ENCODE measurements at regions of chr3 and their contacts with region 1.

Region 1: DNA sequence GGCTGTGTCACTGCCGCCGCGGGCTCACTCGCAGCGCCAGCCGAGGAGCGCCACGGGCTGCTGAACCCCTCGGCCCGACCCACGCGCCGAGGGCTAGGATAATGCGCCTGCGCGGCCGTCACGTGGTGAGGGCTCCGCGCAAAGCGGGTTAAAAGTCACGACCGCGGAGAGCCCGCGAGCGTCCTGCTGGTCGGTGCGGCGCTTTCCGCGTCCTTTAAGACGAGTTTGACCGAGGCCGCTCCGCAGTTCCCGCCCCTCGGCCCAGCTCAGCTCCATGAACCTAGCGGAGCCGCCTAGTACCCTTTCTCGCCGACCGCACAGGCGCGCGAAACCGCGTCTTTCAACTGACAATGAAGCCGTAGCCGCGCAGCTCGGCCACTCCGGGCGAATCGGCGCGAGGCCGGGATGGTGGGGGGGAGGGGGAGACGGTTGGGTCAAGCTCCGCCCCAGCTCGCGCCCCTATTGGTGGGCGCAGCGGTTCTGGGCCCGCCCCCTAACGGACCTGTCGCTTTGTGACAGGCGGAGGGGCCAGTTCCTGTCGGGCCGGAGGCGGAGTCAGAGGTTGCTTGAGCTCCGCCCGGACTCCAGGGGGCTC is 636 bp upstream of the STT3B start:
- DNase-seq: peak; percentile 98
- H3K4me3 Mint-ChIP-seq: no peak overlapping the region
- H3K27ac Mint-ChIP-seq: peak overlapping the region; percentile 99
- H3K4me1 Mint-ChIP-seq: peaks cover 21% of the 10 kb centered on the region
- H3K27me3 Mint-ChIP-seq: no peaks in the 10 kb centered on the region

Region 2: DNA sequence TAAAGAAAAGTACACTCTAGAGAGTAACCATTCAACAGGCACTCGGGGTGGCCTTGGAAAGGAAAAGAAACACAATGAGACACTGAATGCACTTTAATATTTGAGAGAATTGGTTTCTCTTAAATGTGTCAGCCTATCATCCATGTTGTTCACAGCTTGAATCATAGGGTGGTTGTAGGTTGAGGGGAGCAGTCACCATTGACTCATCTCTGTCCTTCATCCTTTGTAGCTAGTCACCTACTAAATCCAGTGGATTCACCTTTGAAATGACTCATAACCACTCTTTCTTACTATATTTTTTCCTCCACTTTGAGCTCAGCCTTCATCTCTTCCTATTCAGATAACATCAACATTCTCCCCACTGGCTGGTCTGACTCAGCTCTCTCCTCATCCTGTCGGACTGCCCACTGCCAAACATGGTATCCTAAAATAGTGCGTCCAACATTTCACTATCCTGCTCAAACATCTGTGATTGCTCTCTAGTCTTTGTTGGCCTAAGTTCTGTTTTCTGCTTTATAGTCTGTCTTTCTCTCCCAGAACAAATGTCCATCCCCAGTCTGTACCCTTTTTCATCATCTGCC is 455.0 kb before region 1 on chr3:
- intact Hi-C with region 1: loop called (anchors 1 kb)
- DNase-seq: peak; percentile 35
- H3K4me3 Mint-ChIP-seq: peak overlapping the region; percentile 38
- H3K27ac Mint-ChIP-seq: peak overlapping the region; percentile 85
- H3K4me1 Mint-ChIP-seq: peaks cover 46% of the 10 kb centered on the region
- H3K27me3 Mint-ChIP-seq: peaks cover 3% of the 10 kb centered on the region

Region 3: GRCh38 chr3:31253782-31254181 is 278.3 kb before region 1 on chr3:
- intact Hi-C with region 1: loop called (anchors 1 kb)
- DNase-seq: no peak
- H3K4me3 Mint-ChIP-seq: no peak overlapping the region
- H3K27ac Mint-ChIP-seq: peak overlapping the region; percentile 89
- H3K4me1 Mint-ChIP-seq: peaks cover 64% of the 10 kb centered on the region
- H3K27me3 Mint-ChIP-seq: peaks cover 3% of the 10 kb centered on the region

Region 4: GRCh38 chr3:31544634-31545033 is 12.5 kb after region 1 on chr3:
- intact Hi-C with region 1: loop called (anchors 1 kb)
- DNase-seq: no peak
- H3K4me3 Mint-ChIP-seq: no peak overlapping the region
- H3K27ac Mint-ChIP-seq: no peak overlapping the region
- H3K4me1 Mint-ChIP-seq: peaks cover 86% of the 10 kb centered on the region
- H3K27me3 Mint-ChIP-seq: no peaks in the 10 kb centered on the region

Region 5: DNA sequence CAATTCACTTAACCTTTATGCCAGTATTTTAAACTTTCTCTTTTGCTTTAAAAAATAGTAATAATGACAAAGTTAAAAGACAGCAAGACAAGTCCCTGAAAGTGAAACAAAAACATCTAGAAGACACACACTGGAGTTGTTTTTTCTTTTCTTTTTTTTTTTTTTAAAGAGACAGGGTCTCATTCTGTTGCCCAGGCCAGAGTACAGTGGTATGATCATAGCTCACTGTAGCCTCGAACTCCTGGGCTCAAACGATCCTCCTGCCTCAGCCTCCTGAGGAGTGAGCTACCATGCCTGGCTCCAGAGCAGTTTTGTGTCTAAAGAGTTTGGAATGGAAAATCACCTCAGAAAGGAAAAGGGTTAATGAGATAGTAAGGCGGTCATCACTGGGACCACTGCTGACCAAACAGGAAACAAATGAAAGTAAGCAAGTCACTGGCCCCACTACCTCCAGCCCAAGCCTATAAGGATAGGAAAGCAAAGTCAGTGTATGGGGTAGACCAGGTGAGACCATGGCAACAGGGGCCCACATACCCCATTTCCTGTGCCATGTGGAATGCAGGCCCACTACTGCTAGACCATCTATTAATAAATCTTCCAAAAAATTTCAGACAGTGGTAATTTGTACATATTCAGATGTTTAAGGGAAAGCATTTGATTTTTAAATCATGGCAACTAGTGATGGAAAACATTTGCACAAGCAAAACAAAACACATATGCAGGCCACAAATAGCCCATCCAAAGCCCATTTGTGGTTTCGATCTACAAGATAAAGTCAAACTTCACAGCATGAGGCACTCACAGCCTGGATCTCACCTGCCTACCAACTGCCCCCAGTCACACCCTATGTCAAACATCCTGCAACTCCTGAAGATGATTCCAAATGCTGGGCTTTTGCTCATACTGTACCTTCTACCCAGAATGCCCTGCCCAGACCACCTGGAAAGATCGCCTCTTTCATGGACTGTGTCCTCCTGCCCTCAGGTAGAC is 386.4 kb after region 1 on chr3:
- intact Hi-C with region 1: loop called (anchors 10 kb)
- DNase-seq: peak; percentile 4
- H3K4me3 Mint-ChIP-seq: peak overlapping the region; percentile 68
- H3K27ac Mint-ChIP-seq: peak overlapping the region; percentile 85
- H3K4me1 Mint-ChIP-seq: peaks cover 37% of the 10 kb centered on the region
- H3K27me3 Mint-ChIP-seq: no peaks in the 10 kb centered on the region

Region 6: DNA sequence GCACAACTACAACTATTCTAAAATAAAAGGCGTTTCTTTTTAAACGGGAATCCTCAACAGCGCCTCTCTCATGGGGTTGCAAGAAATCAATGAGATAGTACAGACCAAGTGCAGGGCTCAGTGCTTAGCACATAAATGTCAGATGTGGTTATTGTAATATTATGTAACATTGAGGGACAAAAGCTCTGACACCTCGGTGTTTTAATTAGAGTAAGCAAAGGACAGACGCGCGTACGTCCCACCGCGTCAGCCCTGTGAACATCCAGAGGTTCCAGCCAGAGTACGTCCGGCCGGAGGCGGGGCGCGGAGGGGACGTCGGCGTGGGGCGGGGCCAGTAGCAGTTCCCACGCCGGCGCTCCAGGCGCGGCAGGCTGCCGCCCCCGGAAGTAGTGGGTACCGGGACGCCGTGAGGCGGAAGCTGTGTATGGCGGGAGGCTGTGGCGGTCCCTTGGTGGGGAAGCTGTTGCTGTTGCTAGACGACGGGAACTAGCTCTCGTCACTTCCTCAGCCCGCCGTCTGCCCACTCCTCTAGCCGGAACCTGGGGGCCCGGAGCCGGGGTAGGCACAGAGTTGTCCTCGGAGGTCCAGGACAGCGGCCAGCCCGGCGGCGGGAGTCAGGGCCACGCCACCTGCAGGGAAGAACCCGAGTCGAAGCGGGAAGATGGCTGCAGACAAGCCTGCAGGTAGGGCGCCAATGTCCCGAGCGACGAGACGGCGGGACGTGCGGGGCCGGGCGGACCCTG is 1152.9 kb after region 1 on chr3 and contains the start of gene CNOT10:
- intact Hi-C with region 1: loop called (anchors 10 kb)
- DNase-seq: peak; percentile 96
- H3K4me3 Mint-ChIP-seq: peak within 1 kb of the TSS; percentile 94
- H3K27ac Mint-ChIP-seq: peak within 1 kb of the TSS; percentile 89
- H3K4me1 Mint-ChIP-seq: peaks cover 30% of the 10 kb centered on the region
- H3K27me3 Mint-ChIP-seq: peaks cover 2% of the 10 kb centered on the region
- total RNA-seq, gene CNOT10: 55.5 and 71.3 TPM in 2 replicates

Measured in activated T-helper 1 cell treated with anti-CD3 and anti-CD28 coated beads, Interleukin-12 subunit alpha, Interleukin-12 subunit beta, Interleukin-2, Interleukin-4 antibody, amounts not matched to agents 30 ng/mL and 10 ng/mL and 1 ng/mL, durations not matched to agents 14 hours and 24 hours and 36 hours (primary cell).